ENCODE measurements at regions of chr2 and their contacts with region 1.

Region 1: DNA sequence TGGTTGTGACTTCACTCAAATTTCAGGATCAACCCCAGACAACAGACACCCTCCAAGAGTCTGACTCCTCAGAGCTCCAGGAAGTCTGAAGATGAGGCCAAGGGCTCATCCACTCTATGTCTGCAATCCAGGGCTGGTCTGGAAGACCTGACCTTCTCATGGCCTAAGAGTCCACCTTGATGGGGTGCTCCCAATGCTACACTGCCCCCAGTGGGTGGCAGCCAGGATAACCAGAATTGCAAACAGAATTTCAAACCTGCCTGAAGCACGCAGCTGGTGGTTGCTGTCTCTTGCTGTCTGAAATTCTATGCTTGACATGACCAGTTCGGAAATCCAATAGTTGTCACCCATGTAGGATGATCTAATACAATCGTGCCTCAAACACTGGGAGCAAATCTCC is 96.0 kb downstream of the UXS1 start:
- DNase-seq: no peak
- H3K4me3 Mint-ChIP-seq: no peak overlapping the region
- H3K27ac Mint-ChIP-seq: no peak overlapping the region
- H3K4me1 Mint-ChIP-seq: peaks cover 33% of the 10 kb centered on the region
- H3K27me3 Mint-ChIP-seq: no peaks in the 10 kb centered on the region

Region 2: GRCh38 chr2:105369747-105370690 is 728.1 kb before region 1 on chr2:
- intact Hi-C with region 1: loop called (anchors 10 kb)
- DNase-seq: peak; percentile 78
- H3K4me3 Mint-ChIP-seq: no peak overlapping the region
- H3K27ac Mint-ChIP-seq: peak overlapping the region; percentile 31
- H3K4me1 Mint-ChIP-seq: peaks cover 13% of the 10 kb centered on the region
- H3K27me3 Mint-ChIP-seq: peaks cover 2% of the 10 kb centered on the region

Region 3: GRCh38 chr2:105576440-105577252 is 521.4 kb before region 1 on chr2:
- intact Hi-C with region 1: loop called (anchors 2 kb)
- DNase-seq: no peak
- H3K4me3 Mint-ChIP-seq: no peak overlapping the region
- H3K27ac Mint-ChIP-seq: peak overlapping the region; percentile 23
- H3K4me1 Mint-ChIP-seq: peaks cover 14% of the 10 kb centered on the region
- H3K27me3 Mint-ChIP-seq: peaks cover 12% of the 10 kb centered on the region

Region 4: DNA sequence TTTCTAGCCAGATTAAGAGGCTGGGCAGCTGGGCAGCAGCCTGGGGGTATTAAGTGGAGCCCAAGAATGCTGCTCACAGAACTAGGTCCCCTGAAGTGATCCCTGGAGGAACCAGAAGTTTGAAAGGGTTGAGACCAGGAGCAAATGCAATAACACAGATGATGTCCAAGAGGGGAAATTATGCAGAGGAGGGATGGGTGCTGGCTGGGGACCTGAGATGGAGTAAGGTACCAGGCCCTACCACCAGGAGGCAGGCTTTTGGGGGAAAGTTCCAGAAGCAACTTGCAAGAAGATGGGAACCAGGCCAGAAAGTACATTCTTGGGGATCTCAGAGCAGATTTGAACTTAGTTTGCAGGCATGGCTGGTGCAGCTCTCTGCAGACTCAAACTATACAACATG is 178.3 kb before region 1 on chr2:
- intact Hi-C with region 1: loop called (anchors 10 kb)
- DNase-seq: no peak
- H3K4me3 Mint-ChIP-seq: no peak overlapping the region
- H3K27ac Mint-ChIP-seq: no peak overlapping the region
- H3K4me1 Mint-ChIP-seq: peaks cover 9% of the 10 kb centered on the region
- H3K27me3 Mint-ChIP-seq: no peaks in the 10 kb centered on the region

Region 5: GRCh38 chr2:106085181-106085940 is 12.7 kb before region 1 on chr2:
- intact Hi-C with region 1: loop called (anchors 1 kb)
- DNase-seq: peak; percentile 44
- H3K4me3 Mint-ChIP-seq: peak overlapping the region; percentile 7
- H3K27ac Mint-ChIP-seq: peak overlapping the region; percentile 72
- H3K4me1 Mint-ChIP-seq: peaks cover 40% of the 10 kb centered on the region
- H3K27me3 Mint-ChIP-seq: peaks cover 6% of the 10 kb centered on the region

Measured in activated T-helper 2 cell treated with anti-CD3 and anti-CD28 coated beads, Interferon-gamma antibody, Interleukin-2, Interleukin-4, amounts not matched to agents 10 μg/mL and 5 μg/mL and 100 μg/mL, durations not matched to agents 14 hours and 24 hours and 36 hours (primary cell).